ENCODE measurements at regions of chr19 and their contacts with region 1.

Region 1: DNA sequence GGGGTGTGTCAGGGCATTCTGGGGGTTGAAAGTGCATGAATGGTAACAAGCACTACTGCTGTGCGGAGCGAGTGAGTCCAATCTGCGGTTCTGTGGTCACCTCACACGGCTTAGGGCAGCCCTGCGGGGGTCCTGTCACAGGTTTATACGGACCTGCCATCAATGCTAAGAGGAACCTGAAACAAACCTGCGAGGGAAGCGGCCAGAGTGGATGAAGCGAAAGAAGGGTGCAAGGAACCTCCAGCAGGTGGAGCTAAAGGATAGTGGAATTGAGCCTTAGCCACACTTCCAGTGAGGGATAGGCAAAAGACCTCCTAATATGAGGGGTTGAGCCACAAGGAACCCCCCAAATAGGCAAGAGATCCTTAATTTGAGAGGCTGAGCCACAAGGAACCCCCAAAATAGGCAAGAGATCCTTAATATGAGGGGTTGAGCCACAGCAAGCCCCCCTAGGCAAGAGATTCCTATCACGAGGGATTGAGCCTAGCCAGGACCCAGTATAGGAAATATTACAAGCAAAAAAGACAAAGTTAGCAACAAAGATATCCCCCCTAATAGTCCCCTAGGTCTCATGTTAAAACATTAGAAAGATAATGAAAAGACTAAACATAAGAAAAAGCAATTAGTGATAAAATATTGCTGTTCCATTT is 6.3 kb upstream of the ZNF69 start:
- DNase-seq: peak; percentile 39 to 82 (median 54)
- ATAC-seq: peak; percentile 60
- H3K4me3 ChIP-seq: no peak overlapping the region
- H3K4me3 Mint-ChIP-seq: no peak overlapping the region
- H3K27ac ChIP-seq: no peak overlapping the region
- H3K27ac Mint-ChIP-seq: no peak overlapping the region
- H3K4me1 ChIP-seq: peaks cover 4% of the 10 kb centered on the region
- H3K4me1 Mint-ChIP-seq: no peaks in the 10 kb centered on the region
- H3K27me3 ChIP-seq: no peaks in the 10 kb centered on the region
- H3K27me3 Mint-ChIP-seq: no peaks in the 10 kb centered on the region
- CTCF ChIP-seq: peak; percentile 74

Region 2: DNA sequence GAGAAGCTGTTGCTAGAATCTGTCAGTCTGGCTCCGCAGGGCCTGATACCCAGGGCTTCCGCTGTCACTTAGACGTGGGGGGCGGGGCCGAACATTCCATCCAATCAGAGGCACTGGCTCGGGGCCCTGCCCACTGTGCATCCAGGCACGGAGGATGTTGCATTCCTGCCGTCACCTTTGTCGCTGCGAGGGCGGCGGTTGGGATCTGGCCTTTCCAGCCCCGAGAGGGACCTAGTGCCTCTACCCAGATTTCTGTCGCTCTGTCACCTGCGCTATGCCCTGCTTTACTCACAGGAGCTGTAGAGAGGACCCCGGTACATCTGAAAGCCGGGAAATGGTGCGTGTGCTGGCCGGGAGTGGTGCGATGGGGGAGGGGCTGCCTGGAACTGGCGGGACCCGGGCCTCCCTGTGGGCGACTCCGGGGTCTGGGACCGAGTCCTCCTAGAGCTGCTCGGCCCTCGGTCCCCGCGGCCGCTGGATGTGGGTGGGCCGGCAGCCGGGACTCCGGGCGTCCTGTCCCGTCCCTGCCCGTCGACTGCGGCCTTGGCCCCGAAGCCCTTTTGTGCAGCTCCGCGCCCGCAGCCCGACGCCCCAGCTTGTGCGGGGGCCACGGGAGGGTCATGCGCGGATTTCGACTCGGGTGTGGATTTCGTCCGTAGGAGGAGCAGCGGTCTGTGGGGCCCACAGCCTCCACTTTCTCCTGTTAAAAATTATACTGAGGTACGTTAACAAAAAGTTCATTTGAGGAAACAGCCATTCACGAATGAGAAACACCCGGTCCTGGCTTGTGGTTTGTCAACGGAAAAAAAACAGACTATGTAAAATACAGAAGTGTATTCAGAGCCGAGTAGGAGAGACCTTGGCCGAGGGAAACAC is 32.4 kb before region 1 on chr19 and contains the start of gene ZNF439:
- CTCF ChIA-PET with region 1: no interaction called
- POLR2A ChIA-PET with region 1: no interaction called
- intact Hi-C with region 1: no loop called
- DNase-seq: peak; percentile 71 to 94 (median 90)
- ATAC-seq: peak; percentile 100
- H3K4me3 ChIP-seq: peak within 1 kb of the TSS; percentile 61
- H3K4me3 Mint-ChIP-seq: peak within 1 kb of the TSS; percentile 93
- H3K27ac ChIP-seq: peak within 1 kb of the TSS in 1 of 2 donors; percentile 61
- H3K27ac Mint-ChIP-seq: peak within 1 kb of the TSS; percentile 83
- H3K4me1 ChIP-seq: peaks cover 20% of the 10 kb centered on the region
- H3K4me1 Mint-ChIP-seq: peaks cover 20% of the 10 kb centered on the region
- H3K27me3 ChIP-seq: no peaks in the 10 kb centered on the region
- H3K27me3 Mint-ChIP-seq: no peaks in the 10 kb centered on the region
- CTCF ChIP-seq: no peak
- total RNA-seq, gene ZNF439: 6.3 to 6.6 TPM

Region 3: GRCh38 chr19:11902228-11902627 is 21.0 kb after region 1 on chr19:
- CTCF ChIA-PET with region 1: no interaction called
- POLR2A ChIA-PET with region 1: no interaction called
- intact Hi-C with region 1: no loop called
- DNase-seq: no peak
- ATAC-seq: no peak
- H3K4me3 ChIP-seq: no peak overlapping the region
- H3K4me3 Mint-ChIP-seq: no peak overlapping the region
- H3K27ac ChIP-seq: no peak overlapping the region
- H3K27ac Mint-ChIP-seq: no peak overlapping the region
- H3K4me1 ChIP-seq: no peaks in the 10 kb centered on the region
- H3K4me1 Mint-ChIP-seq: no peaks in the 10 kb centered on the region
- H3K27me3 ChIP-seq: no peaks in the 10 kb centered on the region
- H3K27me3 Mint-ChIP-seq: no peaks in the 10 kb centered on the region
- CTCF ChIP-seq: no peak

Region 4: GRCh38 chr19:12052497-12053169 is 171.4 kb after region 1 on chr19 and contains the start of gene ZNF878:
- CTCF ChIA-PET with region 1: no interaction called
- POLR2A ChIA-PET with region 1: no interaction called
- intact Hi-C with region 1: loop called in 1 of 2 experiments (anchors 5 kb)
- DNase-seq: peak in 12 of 14 experiments; percentile 15 to 68 (median 30)
- ATAC-seq: peak; percentile 71
- H3K4me3 ChIP-seq: peak within 1 kb of the TSS; percentile 60
- H3K4me3 Mint-ChIP-seq: peak within 1 kb of the TSS; percentile 90
- H3K27ac ChIP-seq: no peak within 1 kb of the TSS
- H3K27ac Mint-ChIP-seq: no peak within 1 kb of the TSS
- H3K4me1 ChIP-seq: peaks cover 16% of the 10 kb centered on the region
- H3K4me1 Mint-ChIP-seq: peaks cover 17% of the 10 kb centered on the region
- H3K27me3 ChIP-seq: peaks cover 0 to 7% of the 10 kb centered on the region in 2 experiments
- H3K27me3 Mint-ChIP-seq: peaks cover 34% of the 10 kb centered on the region
- CTCF ChIP-seq: no peak
- total RNA-seq, gene ZNF878: not detected